GM23248 (cell line): ENCODE measurements at regions of chr7 and their contacts with region 1.

Region 1: DNA sequence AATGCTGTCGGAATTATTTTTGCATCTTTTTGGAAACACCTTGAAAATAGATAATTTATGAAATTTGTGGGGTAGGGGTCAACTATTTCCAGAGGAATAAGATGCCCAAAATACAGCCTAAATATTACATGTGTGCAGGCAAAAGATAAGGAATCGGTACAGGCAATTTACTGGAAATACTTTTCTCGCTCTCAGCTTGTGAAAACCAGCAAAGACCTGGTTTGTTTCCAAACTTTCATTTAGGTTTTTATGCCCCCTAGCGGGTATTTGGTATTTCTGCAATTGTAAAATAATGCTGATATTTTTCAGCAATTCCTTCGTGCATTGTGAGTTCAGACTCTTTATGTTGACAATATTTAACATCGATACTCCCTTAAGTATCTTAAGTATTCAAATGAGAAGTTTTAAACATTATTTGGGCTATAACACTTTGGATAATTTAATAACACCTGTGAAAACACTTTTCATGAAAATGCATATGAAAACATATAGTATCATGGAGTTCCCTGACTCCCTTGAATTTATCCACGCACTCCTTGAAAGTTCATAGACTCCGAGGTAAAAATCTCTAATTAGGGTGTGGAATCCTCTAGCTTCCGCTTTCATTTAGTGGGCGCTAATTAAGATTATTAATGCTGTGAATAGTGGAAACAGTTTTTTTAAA is 132.4 kb downstream of the TSPAN12 start:
- DNase-seq: peak; percentile 81
- H3K4me3 ChIP-seq: 0 out of 2 replicates have a peak overlapping the region, but pooled peaks have one; percentile 42
- H3K27ac ChIP-seq: no peak overlapping the region
- H3K4me1 ChIP-seq: 0 out of 2 replicates have a peak, but pooled peaks cover 4% of the 10 kb centered on the region
- H3K27me3 ChIP-seq: no peaks in the 10 kb centered on the region

Region 2: DNA sequence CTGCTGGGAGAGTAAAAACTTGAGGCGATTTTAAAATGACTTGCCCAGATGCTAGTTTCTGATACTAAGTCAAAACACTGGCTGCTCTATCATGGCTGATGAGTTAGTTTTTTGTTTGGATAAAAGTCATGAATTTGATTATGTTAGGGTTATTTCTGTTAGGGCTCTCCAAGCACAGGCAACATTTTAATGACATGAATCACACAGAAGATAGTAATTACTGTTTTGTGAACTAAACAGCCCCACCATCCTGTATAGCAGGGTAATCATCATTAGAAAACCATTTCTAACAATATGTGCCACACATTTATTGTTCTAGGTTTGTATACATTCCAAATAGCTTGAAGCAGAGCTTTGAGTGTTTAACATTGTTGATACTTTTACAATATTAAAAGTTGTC is 1750.7 kb before region 1 on chr7:
- in situ Hi-C with region 1: no loop called
- DNase-seq: no peak
- H3K4me3 ChIP-seq: no peak overlapping the region
- H3K27ac ChIP-seq: no peak overlapping the region
- H3K4me1 ChIP-seq: no peaks in the 10 kb centered on the region
- H3K27me3 ChIP-seq: no peaks in the 10 kb centered on the region

Region 3: DNA sequence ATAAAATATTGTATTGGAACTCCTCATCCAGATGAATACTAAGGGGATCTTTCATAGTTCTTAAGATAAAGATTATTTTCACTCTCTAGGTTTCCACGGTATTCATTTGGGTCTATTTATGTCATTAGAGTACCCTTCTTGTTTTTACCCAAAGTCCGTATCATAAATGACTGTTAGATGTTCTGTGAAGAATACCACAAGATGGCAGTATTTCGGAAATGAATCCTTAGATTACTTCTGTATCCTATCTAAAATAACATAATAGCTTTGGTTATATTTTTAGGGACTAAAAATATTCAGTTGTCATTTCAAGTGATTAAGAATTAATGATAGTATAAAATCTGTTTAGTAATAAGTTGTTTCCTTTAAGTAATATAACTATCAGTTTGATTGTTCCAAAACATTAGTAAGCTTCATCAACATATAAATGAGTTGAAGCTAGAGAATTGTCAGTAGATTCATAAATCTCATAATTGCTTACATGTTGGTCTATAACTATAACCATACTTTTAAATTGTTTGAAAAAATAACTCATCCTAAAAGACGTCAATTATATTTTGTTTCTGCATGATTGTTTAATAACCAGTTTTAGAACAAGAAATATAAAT is 790.0 kb before region 1 on chr7:
- in situ Hi-C with region 1: loop called (anchors 25 kb)
- DNase-seq: peak; percentile 64
- H3K4me3 ChIP-seq: no peak overlapping the region
- H3K27ac ChIP-seq: no peak overlapping the region
- H3K4me1 ChIP-seq: peaks cover 3% of the 10 kb centered on the region; the same call in 1 of the 2 replicates
- H3K27me3 ChIP-seq: no peaks in the 10 kb centered on the region